ENCODE measurements at regions of chr16 and their contacts with region 1.

Region 1: DNA sequence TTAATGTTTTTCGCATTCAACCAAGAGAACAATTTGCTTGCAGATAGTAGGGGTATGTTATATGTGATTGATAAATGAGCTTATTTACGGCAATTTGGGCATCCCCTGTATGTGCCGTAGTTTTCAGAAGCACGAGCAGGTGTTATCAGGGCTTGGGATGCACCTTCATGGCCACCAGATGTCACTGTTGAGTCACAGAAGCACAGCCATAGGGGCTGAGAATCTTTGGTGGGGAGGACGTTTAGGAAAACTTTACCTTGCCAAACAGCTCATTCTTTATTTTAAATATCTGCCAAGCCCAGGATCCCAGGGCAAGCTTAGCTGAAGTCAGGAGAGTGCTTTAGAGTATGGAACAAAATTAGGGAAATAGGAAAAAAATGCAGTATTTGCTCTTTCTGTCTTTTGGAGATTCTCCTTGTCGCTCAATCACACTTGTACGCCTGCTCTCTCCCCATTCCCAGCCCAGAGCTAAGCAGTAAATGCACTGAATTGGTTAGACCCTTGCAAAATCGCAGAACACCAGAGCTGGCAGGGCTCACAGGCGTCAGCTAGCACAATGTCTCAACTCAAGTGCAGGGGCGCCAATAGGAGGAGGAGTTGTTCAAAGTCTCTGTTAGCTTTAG is 93.6 kb upstream of the MPHOSPH6 start:
- DNase-seq: peak; percentile 2
- H3K4me3 ChIP-seq: no peak overlapping the region
- H3K27ac ChIP-seq: no peak overlapping the region
- H3K27me3 ChIP-seq: peaks cover 8% of the 10 kb centered on the region
- CTCF ChIP-seq: peak; percentile 96

Region 2: DNA sequence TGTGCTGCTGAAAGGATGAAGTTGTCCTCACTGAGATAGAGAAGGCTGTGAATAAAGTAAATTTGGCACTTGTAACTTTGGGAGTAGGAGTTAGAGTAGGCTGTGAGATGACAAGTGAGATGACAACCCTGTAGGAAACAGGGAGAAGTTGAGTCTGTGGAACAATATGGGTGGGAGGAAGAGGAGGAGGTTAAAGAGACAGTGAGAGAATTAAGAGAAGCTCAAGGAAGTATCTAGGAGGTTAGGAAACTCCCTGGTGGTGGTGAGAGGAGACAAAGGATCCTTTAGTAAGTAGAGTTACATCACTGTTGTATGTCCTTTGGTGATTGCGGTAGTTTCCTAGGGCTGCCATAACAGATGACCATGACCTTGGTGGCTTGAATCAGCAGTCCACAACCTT is 239.3 kb before region 1 on chr16:
- CTCF ChIA-PET with region 1: no interaction called
- POLR2A ChIA-PET with region 1: no interaction called
- DNase-seq: no peak
- H3K4me3 ChIP-seq: no peak overlapping the region
- H3K27ac ChIP-seq: no peak overlapping the region
- H3K27me3 ChIP-seq: no peaks in the 10 kb centered on the region
- CTCF ChIP-seq: no peak

Region 3: GRCh38 chr16:82111944-82112343 is 151.7 kb before region 1 on chr16:
- CTCF ChIA-PET with region 1: no interaction called
- POLR2A ChIA-PET with region 1: no interaction called
- DNase-seq: no peak
- H3K4me3 ChIP-seq: no peak overlapping the region
- H3K27ac ChIP-seq: no peak overlapping the region
- H3K27me3 ChIP-seq: no peaks in the 10 kb centered on the region
- CTCF ChIP-seq: no peak

Region 4: DNA sequence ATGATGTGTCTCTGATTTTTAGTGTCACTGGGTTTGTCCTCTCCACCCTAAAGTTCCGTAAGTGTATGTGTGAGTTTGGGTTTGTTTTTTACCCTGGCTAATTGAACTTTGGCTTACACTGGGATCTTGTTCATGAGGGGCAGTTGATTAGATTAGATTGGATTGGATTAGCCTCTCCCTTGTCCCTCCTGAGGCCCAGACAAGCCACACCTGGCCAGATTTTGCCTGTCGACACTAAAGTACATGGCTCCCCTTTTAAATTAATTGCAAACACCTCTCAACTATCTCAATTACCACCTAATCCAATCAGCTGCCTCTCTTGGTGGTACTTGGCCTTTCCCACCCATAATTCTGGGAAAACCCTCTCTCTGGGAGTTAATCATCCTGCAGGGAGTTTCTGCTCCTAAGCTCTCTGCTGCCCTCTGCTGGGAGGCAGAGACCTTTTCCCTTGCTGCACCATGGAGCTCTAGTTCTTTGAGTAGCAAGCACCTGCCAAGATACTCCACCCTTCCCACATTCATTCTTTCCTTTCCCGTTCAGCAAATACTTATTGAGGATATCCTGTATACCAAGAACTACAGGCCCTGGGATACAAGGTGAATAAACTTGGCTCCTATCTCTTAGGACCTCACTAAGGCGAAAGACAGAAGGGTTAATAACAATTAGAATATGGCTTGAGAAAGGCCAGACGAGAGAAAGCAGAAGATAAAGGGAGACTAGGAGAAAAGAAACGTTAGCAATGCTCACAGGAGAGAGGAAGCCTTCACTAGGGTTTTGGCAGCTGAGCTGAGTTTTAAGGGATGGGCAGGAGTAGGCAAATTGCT is 33.6 kb before region 1 on chr16:
- CTCF ChIA-PET with region 1: interaction called, 23 read pairs
- POLR2A ChIA-PET with region 1: no interaction called
- DNase-seq: peak; percentile 56
- H3K4me3 ChIP-seq: no peak overlapping the region
- H3K27ac ChIP-seq: no peak overlapping the region
- H3K27me3 ChIP-seq: peaks cover 3% of the 10 kb centered on the region
- CTCF ChIP-seq: peak; percentile 97

Region 5: DNA sequence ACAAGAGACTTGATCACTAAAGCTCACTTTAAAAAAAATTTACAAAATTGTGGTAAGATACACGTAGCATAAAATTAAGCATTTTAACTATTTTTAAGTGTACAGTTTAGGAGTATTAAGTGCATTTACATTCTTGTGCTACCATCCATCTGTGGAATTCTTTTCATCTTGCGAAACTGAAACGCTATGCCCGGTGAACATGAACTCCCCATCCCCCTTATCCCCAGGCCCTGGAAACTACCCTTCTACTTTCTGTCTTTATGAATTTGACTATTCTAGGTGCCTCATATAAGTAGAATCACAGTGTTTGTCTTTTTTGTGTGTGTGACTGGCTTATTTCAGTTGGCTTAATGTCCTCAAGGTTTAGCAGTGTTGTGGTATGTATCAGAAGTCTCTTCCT is 12.5 kb before region 1 on chr16:
- CTCF ChIA-PET with region 1: interaction called, 21 read pairs
- POLR2A ChIA-PET with region 1: no interaction called
- DNase-seq: no peak
- H3K4me3 ChIP-seq: no peak overlapping the region
- H3K27ac ChIP-seq: no peak overlapping the region
- H3K27me3 ChIP-seq: peaks cover 3% of the 10 kb centered on the region
- CTCF ChIP-seq: no peak

Region 6: GRCh38 chr16:82287937-82288336 is 24.3 kb after region 1 on chr16:
- CTCF ChIA-PET with region 1: interaction called, 16 read pairs
- POLR2A ChIA-PET with region 1: no interaction called
- DNase-seq: no peak
- H3K4me3 ChIP-seq: no peak overlapping the region
- H3K27ac ChIP-seq: no peak overlapping the region
- H3K27me3 ChIP-seq: no peaks in the 10 kb centered on the region
- CTCF ChIP-seq: no peak

Region 7: DNA sequence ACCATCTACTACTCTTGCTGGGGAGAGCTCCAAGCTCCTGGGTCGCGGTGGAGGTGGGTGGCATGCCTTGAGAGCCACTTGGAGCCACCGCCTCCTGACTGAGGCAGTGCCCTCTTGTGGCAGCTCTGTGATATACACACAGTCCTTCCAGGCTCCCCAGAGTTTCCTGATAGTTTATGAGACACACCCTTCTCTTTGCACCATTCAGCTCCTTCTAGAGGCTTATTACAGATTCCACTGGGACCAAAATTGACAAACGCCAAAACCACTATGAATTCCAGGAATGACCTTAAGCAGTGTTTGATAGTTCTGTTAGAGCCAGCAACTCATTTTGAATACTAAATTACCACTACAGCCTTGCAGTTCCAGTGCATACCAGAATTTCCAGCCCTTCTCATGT is 193.1 kb after region 1 on chr16:
- CTCF ChIA-PET with region 1: interaction called, 40 read pairs
- POLR2A ChIA-PET with region 1: no interaction called
- DNase-seq: no peak
- H3K4me3 ChIP-seq: no peak overlapping the region
- H3K27ac ChIP-seq: no peak overlapping the region
- H3K27me3 ChIP-seq: no peaks in the 10 kb centered on the region
- CTCF ChIP-seq: peak; percentile 72

Region 8: DNA sequence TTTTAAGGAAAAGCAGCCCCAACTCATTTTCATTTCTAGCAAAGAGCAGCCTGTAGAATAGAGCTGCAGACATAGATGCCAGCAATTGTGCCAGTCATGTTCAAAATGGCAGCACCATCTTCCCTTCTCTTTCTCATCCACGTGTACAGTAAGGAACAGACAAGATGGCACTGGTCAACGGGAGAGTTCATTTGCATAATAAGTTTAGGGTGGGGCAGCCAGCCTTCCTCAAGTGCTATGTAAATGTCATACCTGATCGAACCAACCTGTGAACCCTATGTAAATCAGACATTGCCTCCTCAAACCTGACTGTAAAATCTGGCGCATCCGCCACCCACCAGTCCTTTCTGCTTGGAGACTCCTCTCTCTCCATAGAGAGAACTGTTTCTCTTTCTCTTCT is 213.2 kb after region 1 on chr16:
- CTCF ChIA-PET with region 1: no interaction called
- POLR2A ChIA-PET with region 1: no interaction called
- DNase-seq: no peak
- H3K4me3 ChIP-seq: no peak overlapping the region
- H3K27ac ChIP-seq: no peak overlapping the region
- H3K27me3 ChIP-seq: no peaks in the 10 kb centered on the region
- CTCF ChIP-seq: no peak

Region 9: DNA sequence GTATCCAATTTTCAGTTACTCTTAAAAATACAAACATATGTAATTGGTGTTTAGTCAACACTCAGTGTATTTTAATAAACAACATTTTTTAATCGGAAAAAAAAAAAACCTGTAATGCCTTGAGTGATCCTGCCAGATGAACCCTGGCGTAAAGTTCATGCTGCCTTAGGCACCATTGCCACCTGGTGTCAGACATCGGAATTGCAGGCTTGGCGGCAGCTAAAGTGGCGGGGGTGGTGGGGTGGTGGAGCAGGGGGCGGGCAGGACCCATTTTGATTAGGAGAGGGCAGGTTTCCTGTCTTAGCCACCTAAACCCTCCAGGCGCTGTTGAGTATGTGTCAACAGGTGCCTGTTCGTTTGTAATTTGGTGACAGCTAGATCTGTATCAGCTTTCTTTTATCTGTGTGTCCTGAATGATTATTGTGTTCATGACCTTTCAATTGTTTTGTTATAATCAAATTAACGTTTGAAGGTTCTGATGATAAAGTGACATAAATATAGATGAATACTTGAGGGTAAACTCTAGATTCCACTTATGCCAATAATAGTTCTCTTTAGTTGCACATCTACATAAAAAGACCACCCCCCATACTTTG is 951.9 kb after region 1 on chr16:
- CTCF ChIA-PET with region 1: interaction called, 41 read pairs
- POLR2A ChIA-PET with region 1: no interaction called
- DNase-seq: peak; percentile 1
- H3K4me3 ChIP-seq: no peak overlapping the region
- H3K27ac ChIP-seq: no peak overlapping the region
- H3K27me3 ChIP-seq: no peaks in the 10 kb centered on the region
- CTCF ChIP-seq: peak; percentile 96